ENCODE measurements at regions of chr11 and their contacts with region 1.

Region 1: GRCh38 chr11:44565211-44565952 is at the start of gene CD82:
- DNase-seq: peak; percentile 98
- CTCF ChIP-seq: peak; percentile 15

Region 2: DNA sequence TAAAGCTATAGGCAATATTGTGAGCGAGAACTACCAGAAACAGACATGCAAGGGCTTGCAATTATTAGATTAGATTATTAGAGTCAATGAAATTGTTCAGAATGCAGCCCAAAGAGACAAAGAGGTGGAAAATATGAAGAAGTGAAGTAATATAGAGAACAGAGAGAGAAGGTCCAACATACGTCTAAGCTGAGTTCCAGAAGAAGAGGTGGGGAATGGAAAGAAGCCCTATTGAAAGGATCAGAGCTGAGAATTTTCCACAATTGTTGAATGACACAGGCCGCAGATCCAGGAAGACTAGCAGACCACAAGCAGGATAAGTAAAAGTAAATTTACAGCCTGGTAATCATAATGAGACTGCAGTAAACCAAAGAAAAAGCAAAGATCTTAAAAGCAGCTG is 376.7 kb before region 1 on chr11:
- in situ Hi-C with region 1: no loop called
- DNase-seq: no peak
- CTCF ChIP-seq: no peak

Region 3: DNA sequence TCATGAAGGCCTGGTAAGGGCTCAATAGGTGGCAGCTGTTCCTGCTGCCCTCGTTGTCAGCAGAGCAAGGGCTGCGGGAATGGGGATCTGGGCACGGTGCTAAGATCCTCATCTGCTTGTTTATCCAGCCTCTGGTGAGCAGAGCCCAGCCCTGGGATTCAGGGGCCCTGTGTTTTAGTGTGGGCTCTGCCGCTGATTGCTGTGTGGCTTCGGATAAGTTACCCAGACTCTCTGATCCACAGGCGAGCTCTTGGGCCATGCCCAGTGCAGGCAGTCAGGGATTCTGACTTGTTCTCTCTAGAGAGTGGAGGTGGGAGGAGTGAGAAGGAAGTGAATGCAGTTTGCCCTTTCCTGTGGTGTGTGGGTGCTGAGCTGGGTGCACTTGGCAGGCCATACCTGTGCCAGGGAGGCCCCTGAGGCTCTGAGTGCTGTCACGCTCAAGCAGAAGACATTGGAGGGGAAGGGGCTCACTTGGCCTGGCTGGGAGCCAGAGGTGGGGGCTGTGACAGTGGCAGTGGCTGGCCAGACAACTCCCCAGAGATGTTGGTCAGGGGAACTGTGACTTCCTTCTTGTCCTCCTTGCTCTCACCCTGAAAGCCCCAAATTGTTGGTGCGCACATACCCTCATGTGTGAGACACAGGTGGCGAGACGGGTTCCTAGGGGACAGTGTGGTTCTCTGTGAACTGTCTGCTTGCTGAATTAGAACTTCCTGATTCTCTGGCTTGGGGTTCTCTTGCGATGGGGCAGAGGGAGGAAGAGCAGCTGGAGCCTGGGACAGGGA is 43.8 kb after region 1 on chr11:
- in situ Hi-C with region 1: loop called (anchors 5 kb)
- DNase-seq: peak; percentile 62
- CTCF ChIP-seq: no peak

Measured in GM13976 (cell line).